Sciatic nerve (tissue), 2 donors: ENCODE measurements at regions of chr9 and their contacts with region 1.

Region 1: DNA sequence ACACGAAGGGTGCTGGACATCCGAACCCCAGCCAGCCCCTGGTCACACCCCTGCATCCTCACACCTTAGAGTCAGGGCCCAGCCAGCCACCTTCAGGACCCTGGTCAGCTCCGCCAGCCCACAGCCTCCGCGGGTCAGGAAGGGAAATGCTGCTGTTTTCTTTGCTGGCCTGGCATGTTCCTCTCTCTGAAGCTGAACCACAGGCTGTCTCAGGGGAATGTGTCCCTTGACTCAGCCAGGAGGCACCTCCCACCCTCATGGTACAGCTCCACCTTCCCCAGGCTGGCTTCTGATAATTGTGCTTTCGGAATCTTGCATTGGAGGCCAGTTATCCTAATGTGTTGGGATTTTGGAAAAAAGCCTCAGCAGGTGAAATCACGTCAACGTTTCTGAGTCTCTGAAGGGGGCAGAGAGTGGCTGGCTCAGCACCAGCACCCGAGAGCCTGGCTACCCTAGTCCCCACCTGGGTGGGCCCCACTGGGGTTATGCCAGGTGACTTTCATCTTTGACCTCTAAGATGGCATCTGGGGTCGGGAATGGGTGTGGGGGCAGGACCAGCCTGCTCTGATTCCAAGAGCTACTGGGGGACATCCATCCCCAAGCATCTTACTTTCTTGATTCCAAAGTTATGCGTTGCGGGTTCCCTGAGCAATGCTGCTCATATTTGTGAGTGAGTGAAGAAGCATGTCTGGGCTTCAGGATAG is 9.8 kb upstream of the OLFM1 start:
- DNase-seq: peak; percentile 67
- ATAC-seq: no peak

Region 2: GRCh38 chr9:135416664-135417290 is 339.1 kb after region 1 on chr9:
- intact Hi-C with region 1: loop called (anchors 5 kb)
- DNase-seq: no peak
- ATAC-seq: no peak